ENCODE measurements at regions of chr11 and their contacts with region 1.

Region 1: GRCh38 chr11:12331239-12331874 is 46.0 kb upstream of the PARVA start:
- DNase-seq: peak; percentile 24 to 83 (median 66)
- ATAC-seq: peak in 3 of 4 experiments; percentile 37 to 58 (median 42)
- H3K4me3 ChIP-seq: no peak overlapping the region
- H3K4me3 Mint-ChIP-seq: no peak overlapping the region
- H3K27ac ChIP-seq: no peak overlapping the region
- H3K27ac Mint-ChIP-seq: no peak overlapping the region
- H3K4me1 ChIP-seq: peaks cover 0 to 3% of the 10 kb centered on the region in 2 experiments
- H3K4me1 Mint-ChIP-seq: peaks cover 0 to 6% (median 5%) of the 10 kb centered on the region in 3 donors
- H3K27me3 ChIP-seq: no peaks in the 10 kb centered on the region
- H3K27me3 Mint-ChIP-seq: no peaks in the 10 kb centered on the region

Region 2: DNA sequence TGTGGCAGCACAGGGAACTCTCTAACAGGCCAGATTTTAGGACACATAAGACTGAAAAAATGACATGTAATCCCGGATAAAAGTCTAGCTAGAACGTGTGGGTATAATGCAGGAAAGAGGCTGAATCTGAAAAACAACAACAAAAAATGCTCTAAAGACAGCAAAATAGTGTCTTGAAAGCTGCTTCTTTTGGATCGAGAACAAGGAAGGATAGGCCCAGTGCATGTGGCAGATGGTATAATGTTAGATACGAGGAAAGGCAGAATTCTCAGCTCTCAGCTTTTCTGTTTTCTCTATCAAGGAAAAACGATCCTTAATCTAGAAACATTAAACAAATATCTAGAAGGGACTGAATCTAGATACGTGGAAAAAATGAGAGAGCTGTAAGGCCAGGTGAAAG is 12.2 kb after region 1 on chr11:
- CTCF ChIA-PET with region 1: interaction called in 1 of 2 experiments, 15 read pairs
- POLR2A ChIA-PET with region 1: no interaction called
- DNase-seq: no peak
- ATAC-seq: no peak
- H3K4me3 ChIP-seq: no peak overlapping the region
- H3K4me3 Mint-ChIP-seq: no peak overlapping the region
- H3K27ac ChIP-seq: no peak overlapping the region
- H3K27ac Mint-ChIP-seq: no peak overlapping the region
- H3K4me1 ChIP-seq: no peaks in the 10 kb centered on the region
- H3K4me1 Mint-ChIP-seq: no peaks in the 10 kb centered on the region
- H3K27me3 ChIP-seq: peaks cover 0 to 2% of the 10 kb centered on the region in 2 experiments
- H3K27me3 Mint-ChIP-seq: peaks cover 0 to 3% of the 10 kb centered on the region in 2 donors

Region 3: DNA sequence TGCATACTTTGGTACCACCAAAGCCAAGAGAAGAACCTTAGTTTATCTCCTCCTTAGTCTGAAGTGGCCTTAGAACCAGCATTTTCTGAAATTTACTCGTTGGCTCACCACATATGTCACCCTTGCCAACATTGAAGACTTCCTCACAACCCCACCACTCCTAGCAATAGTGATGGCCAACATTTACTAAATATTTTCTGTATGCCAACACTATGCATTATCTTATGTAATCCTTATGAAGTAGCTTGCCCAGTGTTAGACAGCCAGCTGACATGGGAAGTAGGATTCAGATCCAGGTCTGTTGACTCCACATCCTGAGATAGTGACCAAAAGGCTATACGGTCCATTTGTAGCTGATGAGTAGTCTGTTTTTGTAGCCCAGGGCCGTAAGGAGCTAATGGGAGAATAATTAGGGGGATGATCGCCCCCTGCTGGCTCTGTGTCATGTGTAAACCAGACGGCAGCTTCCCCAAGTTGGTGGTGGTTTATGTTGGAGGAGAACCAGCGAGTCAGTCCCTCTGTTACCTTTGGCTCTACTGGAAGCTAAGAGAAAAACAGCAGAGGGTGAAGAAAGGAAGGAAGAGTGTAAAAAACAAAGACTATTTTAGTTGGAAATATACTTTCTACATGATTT is 557.3 kb after region 1 on chr11:
- CTCF ChIA-PET with region 1: interaction called, 30 to 94 read pairs
- POLR2A ChIA-PET with region 1: no interaction called
- DNase-seq: peak in 34 of 35 experiments; percentile 4 to 77 (median 54)
- ATAC-seq: peak in 3 of 4 experiments; percentile 41 to 68 (median 48)
- H3K4me3 ChIP-seq: no peak overlapping the region
- H3K4me3 Mint-ChIP-seq: no peak overlapping the region
- H3K27ac ChIP-seq: no peak overlapping the region
- H3K27ac Mint-ChIP-seq: no peak overlapping the region
- H3K4me1 ChIP-seq: no peaks in the 10 kb centered on the region
- H3K4me1 Mint-ChIP-seq: no peaks in the 10 kb centered on the region
- H3K27me3 ChIP-seq: peaks cover 2 to 6% of the 10 kb centered on the region in 2 experiments
- H3K27me3 Mint-ChIP-seq: peaks cover 12 to 18% of the 10 kb centered on the region in 2 donors